Heart left ventricle (tissue), 16 donors: ENCODE measurements at regions of chr16 and their contacts with region 1.

Region 1: GRCh38 chr16:48318630-48319029 is 66.6 kb downstream of the SIAH1 start:
- DNase-seq: peak in 4 of 5 donors; percentile 40 to 68 (median 50)
- ATAC-seq: peak; percentile 38 to 90 (median 84)
- H3K4me3 ChIP-seq: peak overlapping the region in 1 of 12 donors; percentile 21
- H3K27ac ChIP-seq: peak overlapping the region in 11 of 12 donors; percentile 27 to 81 (median 62)
- H3K4me1 ChIP-seq: peaks cover 3 to 40% (median 26%) of the 10 kb centered on the region in 12 donors
- H3K27me3 ChIP-seq: no peaks in the 10 kb centered on the region
- CTCF ChIP-seq: no peak
- POLR2A ChIP-seq: no peak

Region 2: DNA sequence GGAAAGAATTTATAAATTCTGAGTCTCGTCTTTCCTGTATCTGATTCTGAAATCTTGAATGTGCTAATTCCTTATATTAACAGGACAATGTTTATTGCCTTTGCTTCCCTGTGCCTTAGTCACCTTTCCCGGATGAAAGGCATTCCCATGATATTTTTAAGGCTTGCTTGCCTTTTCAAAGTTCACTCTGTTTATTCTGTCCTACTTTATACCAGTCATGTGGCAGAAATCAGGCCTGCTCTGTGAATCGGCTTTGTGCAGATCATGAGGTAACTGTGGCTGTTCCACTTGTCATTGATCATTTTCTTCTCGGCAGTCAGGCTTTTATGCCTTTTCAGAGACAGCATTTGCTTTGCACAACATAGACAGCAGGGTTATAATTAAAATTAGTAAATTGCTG is 42.5 kb before region 1 on chr16:
- intact Hi-C with region 1: loop called in 2 of 10 experiments (anchors 5 to 10 kb)
- DNase-seq: no peak
- ATAC-seq: peak in 2 of 4 donors; percentile 17 to 42
- H3K4me3 ChIP-seq: no peak overlapping the region
- H3K27ac ChIP-seq: peak overlapping the region in 9 of 12 donors; percentile 1 to 45 (median 17)
- H3K4me1 ChIP-seq: peaks cover 6 to 63% (median 34%) of the 10 kb centered on the region in 12 donors
- H3K27me3 ChIP-seq: no peaks in the 10 kb centered on the region
- CTCF ChIP-seq: no peak
- POLR2A ChIP-seq: no peak

Region 3: DNA sequence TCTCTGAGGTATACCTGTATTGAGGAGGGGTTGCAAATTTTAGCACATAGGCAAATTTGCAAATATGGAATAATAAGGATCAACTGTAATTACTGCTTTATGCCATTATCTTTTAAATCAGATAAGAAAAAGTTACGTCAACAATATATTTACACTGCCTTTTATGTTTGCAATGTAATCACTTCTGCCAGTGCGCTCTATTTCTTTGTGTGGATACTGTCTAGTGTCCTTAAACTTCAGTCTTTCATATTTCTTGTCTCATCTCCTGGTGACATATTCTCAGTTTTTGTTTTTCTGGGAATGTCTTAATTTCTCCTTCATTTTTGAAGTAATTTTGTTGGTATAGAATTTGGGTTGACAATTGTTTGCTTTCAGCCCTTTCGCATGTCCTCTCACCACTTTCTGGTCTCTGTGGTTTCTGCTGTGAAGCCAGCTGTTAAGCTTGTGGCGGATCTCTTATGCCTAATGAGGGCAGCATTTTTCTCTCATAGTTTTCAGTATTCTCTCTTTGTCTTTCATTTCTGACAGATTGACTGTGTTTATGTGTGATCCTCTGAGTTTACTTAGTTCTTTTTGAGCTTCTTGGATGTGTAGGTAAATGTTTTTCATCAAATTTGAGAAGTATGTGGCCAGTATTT is 33.7 kb before region 1 on chr16:
- intact Hi-C with region 1: loop called in 1 of 10 experiments (anchors 5 kb)
- DNase-seq: no peak
- ATAC-seq: no peak
- H3K4me3 ChIP-seq: no peak overlapping the region
- H3K27ac ChIP-seq: no peak overlapping the region
- H3K4me1 ChIP-seq: peaks cover 3 to 34% (median 23%) of the 10 kb centered on the region in 12 donors
- H3K27me3 ChIP-seq: no peaks in the 10 kb centered on the region
- CTCF ChIP-seq: no peak
- POLR2A ChIP-seq: no peak

Region 4: GRCh38 chr16:48365581-48366164 is 47.0 kb after region 1 on chr16:
- intact Hi-C with region 1: loop called in 1 of 10 experiments (anchors 5 kb)
- DNase-seq: peak; percentile 90 to 95 (median 93)
- ATAC-seq: peak; percentile 98 to 100 (median 100)
- H3K4me3 ChIP-seq: peak overlapping the region; percentile 38 to 70 (median 61)
- H3K27ac ChIP-seq: peak overlapping the region; percentile 43 to 90 (median 75)
- H3K4me1 ChIP-seq: peaks cover 3 to 64% (median 41%) of the 10 kb centered on the region in 12 donors
- H3K27me3 ChIP-seq: no peaks in the 10 kb centered on the region
- CTCF ChIP-seq: peak in 4 of 12 donors; percentile 15 to 36 (median 23)
- POLR2A ChIP-seq: peak; percentile 69 to 97